ENCODE measurements at regions of chr10 and their contacts with region 1.

Region 1: DNA sequence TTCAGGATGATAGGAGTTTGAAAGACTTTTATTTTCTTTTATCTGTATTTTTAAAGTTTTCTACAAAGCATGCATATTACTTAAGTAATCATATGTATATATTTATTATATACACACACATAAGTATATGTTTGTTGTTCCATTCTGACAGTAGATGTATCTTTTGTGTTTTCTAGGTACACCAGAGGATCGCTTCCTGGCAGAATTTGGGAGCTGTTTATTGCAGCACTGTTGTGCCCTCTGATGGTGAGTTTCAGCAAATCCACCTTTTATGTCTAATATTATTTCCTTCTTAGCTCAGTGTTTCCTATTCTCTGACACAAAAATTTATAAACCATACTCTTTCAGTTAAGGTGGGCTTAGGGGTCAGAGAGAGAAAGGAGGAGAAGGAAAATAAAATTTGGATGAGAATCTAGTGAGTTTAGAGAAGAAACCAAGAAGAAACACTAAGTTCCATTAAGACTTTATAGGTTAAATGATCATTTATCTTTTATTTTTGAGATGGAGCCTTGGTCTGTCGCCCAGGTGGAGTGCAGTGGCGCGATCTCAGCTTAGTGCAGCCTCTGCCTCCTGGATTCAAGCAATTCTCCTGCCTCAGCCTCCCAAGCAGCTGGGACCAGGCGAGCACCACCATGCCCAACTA is 59.2 kb upstream of the OIT3 start:
- DNase-seq: peak; percentile 31
- ATAC-seq: peak; percentile 72 to 73

Region 2: GRCh38 chr10:72692057-72692910 is 142.0 kb before region 1 on chr10 and contains the start of gene MCU:
- intact Hi-C with region 1: loop called (anchors 5 kb)
- DNase-seq: peak; percentile 96
- ATAC-seq: peak; percentile 98 to 99
- total RNA-seq, gene MCU: 16.1 to 21.1 TPM

Region 3: GRCh38 chr10:72709041-72709440 is 125.3 kb before region 1 on chr10:
- intact Hi-C with region 1: loop called in 1 of 2 experiments (anchors 5 kb)
- DNase-seq: peak; percentile 47
- ATAC-seq: peak in 1 of 2 donors; percentile 33